Heart right ventricle (tissue), 16 donors: ENCODE measurements at regions of chr5 and their contacts with region 1.

Region 1: DNA sequence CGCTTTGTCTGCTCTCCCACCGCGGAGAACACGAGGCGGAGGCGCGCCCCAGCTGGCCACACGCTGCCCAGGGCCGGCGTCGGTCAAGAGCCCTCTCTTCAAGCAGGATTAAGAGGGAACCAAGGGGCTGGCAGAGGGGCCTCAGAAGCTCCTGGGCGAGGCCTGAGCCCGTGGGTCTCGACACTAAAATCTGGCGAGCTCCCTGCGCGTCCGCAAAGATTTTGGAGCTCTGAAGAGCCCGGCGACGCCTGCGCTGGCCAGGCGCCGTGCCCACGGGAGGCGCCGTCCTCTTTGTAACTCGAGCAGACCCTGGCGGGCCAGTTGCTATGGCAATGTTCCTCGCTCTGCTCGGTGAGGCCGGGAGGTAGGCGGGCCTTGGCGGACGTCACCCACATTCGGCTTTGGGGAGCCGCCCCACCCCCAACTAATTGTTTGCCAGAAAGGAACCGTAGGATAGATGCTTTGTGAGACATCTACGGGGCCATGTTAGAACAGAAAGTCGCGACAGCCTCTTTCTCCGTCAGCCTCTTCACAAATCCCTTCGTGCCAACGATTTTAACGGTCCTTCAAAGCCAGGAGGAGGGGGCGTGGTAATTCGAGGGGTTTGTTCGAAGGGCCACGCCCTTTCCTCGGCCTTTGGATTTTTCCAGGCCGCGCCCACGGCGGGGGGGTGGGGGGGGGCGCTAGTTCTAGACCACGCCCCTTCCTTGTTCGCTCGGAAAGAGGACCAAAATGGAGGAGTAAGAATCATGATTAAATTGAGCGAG is 714 bp upstream of the CNOT8 start:
- DNase-seq: peak; percentile 92 to 95
- ATAC-seq: peak; percentile 80 to 90 (median 85)
- H3K4me3 ChIP-seq: peak overlapping the region; percentile 47 to 87 (median 80)
- H3K27ac ChIP-seq: peak overlapping the region; percentile 95 to 100 (median 98)
- H3K4me1 ChIP-seq: peaks cover 5 to 49% (median 43%) of the 10 kb centered on the region in 9 donors
- H3K27me3 ChIP-seq: no peaks in the 10 kb centered on the region
- CTCF ChIP-seq: peak in 6 of 9 donors; percentile 1 to 36 (median 24)

Region 2: DNA sequence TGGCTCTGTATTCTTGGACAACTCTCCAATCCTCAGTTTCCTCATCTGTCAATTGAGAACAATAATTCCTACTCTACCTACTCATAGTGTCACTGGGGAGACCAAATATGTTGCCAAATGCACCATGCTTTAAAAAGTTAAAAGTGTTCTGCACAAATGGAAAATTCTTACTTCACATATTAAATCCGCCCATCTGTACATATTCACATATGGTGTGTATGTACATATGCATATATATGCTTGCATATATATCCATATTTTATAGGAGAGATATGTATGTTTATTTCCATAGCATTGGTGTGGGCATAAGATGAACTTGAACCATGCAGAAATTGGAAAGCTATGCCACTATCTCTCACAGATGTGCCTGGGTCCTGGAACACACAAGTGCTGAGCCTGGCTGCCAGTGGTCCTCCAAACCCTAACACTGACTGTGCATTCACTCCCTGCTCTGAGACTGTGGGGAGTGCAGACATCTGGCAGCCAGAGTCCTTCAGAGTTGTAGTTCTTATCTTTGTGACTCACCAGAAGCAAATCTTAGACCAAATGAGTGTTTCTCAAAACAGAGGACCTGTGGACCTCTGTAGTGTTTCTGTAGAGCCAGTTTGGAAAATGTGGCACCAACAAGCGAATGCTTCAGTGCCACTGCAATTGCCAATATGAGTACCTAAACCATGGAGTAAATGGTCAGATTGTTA is 1198.5 kb before region 1 on chr5:
- intact Hi-C with region 1: no loop called
- DNase-seq: no peak
- ATAC-seq: peak in 1 of 8 donors; percentile 51
- H3K4me3 ChIP-seq: no peak overlapping the region
- H3K27ac ChIP-seq: no peak overlapping the region
- H3K4me1 ChIP-seq: peaks cover 0 to 6% (median 0%) of the 10 kb centered on the region in 9 donors
- H3K27me3 ChIP-seq: no peaks in the 10 kb centered on the region
- CTCF ChIP-seq: no peak

Region 3: GRCh38 chr5:154478224-154478565 is 379.5 kb before region 1 on chr5 and contains the start of gene HAND1:
- intact Hi-C with region 1: loop called in 1 of 10 experiments (anchors 10 kb)
- DNase-seq: peak; percentile 72 to 81
- ATAC-seq: peak; percentile 79 to 95 (median 92)
- H3K4me3 ChIP-seq: peak within 1 kb of the TSS; percentile 46 to 65 (median 59)
- H3K27ac ChIP-seq: peak within 1 kb of the TSS; percentile 13 to 86 (median 76)
- H3K4me1 ChIP-seq: peaks cover 18 to 75% (median 56%) of the 10 kb centered on the region in 9 donors
- H3K27me3 ChIP-seq: peaks cover 33 to 100% (median 100%) of the 10 kb centered on the region in 7 donors
- CTCF ChIP-seq: no peak
- total RNA-seq, gene HAND1: 22.2 to 33.0 (median 24.8) TPM

Region 4: GRCh38 chr5:154937718-154938466 is 80.2 kb after region 1 on chr5 and contains the start of gene GEMIN5:
- intact Hi-C with region 1: loop called in 2 of 10 experiments (anchors 5 kb)
- DNase-seq: peak; percentile 81 to 89
- ATAC-seq: peak; percentile 94 to 96 (median 95)
- H3K4me3 ChIP-seq: peak within 1 kb of the TSS; percentile 47 to 99 (median 84)
- H3K27ac ChIP-seq: peak within 1 kb of the TSS in 9 of 10 donors; percentile 62 to 87 (median 78)
- H3K4me1 ChIP-seq: peaks cover 0 to 47% (median 33%) of the 10 kb centered on the region in 9 donors
- H3K27me3 ChIP-seq: no peaks in the 10 kb centered on the region
- CTCF ChIP-seq: no peak
- total RNA-seq, gene GEMIN5: 12.7 to 18.5 (median 16.0) TPM